SK-N-SH (cell line): ENCODE measurements at regions of chr14 and their contacts with region 1.

Region 1: DNA sequence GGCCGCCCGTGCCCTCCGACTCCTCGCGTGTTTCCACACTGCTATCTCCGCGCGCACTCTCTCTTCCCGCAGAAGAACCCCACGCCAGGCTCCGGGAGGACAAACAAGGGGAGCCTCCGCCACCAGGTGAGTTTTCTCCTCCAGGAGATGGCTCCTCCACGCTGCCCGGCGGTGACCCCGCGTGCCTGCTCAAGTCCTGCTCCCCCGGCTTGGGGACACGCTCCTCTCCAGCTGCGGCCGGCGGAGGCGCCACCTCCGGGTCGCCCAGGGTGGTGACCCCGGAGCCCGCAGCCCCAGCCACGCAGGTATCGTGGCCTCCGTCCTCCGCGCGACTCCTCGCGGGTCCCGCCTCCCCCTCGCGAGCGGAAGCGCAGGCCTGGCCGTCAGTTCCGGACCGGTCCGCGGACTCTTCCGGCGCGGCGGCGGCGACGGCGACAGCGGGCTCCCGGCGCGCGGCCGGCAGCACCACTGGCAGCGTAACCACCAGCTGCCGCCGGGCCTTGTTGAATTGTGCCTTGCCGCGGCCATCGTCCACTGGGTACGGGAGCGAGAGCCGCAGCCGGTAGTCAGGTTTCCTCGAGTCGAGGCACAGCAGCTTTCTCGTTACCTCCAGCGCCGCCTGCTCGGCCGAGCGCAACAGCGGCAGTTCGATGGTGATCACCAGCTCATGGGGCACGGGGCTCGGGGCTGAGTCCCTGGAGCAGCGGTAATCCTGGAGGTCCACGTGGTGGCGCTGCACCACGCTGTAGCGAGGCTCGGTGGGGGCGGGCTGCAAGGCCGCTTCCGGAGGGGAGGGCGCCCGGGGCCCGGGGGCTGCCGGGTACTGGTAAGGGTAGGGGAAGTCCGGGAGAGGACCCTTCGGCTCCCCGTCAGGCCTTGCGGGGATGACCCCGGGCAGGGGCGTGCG is 1.2 kb downstream of the DNAAF2 start:
- DNase-seq: peak; percentile 97
- H3K4me3 ChIP-seq: peak overlapping the region; percentile 72 to 86
- H3K27ac ChIP-seq: peak overlapping the region; percentile 94 to 95
- H3K4me1 ChIP-seq: peaks cover 4 to 7% of the 10 kb centered on the region in 2 experiments; a peak in 3 of 4 replicates
- H3K27me3 ChIP-seq: no peaks in the 10 kb centered on the region
- CTCF ChIP-seq: peak; percentile 90
- EP300 ChIP-seq: no peak
- RAD21 ChIP-seq: peak; percentile 77

Region 2: DNA sequence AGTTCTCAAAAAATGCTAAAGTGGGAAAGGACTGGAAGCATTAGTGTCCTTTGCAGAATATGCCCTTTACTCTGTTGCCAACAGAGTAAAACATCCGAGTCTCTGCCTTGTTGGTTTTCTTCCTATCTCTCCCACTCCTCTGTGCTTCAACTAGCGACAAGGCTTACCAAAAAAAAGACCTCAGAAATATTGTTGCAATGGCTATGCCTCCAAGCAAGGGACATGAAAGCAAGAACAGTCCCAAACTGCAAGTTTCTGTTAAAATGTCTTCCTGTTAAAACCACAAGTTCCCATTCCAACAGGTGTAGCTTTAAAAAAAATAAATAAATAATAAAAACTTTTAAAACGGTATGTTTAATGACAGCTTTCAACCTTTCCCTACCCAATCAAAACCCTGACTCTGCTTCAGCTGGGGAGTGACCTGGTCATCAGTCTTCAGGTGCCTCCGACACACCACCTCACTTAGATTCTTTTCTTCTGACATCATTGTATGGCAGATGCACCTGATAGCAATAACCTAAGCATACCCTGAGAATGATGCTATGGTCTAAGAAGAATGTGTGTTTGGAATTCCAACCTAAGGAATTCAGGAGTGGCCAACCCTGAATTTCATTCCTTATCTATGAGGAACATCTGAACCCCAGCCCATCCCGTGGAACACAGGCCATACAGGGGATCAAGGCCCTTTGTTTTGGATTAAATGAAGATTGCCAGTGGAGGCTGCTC is 128.7 kb before region 1 on chr14:
- CTCF ChIA-PET with region 1: no interaction called
- POLR2A ChIA-PET with region 1: no interaction called
- DNase-seq: no peak
- H3K4me3 ChIP-seq: no peak overlapping the region
- H3K27ac ChIP-seq: no peak overlapping the region
- H3K4me1 ChIP-seq: no peaks in the 10 kb centered on the region
- H3K27me3 ChIP-seq: peaks cover 7% of the 10 kb centered on the region; the same call in 1 of the 2 replicates
- CTCF ChIP-seq: no peak
- EP300 ChIP-seq: no peak
- RAD21 ChIP-seq: no peak

Region 3: GRCh38 chr14:49620182-49621113 is 13.4 kb before region 1 on chr14 and contains the starts of genes MGAT2 and RPL36AL:
- CTCF ChIA-PET with region 1: interaction called, 39 read pairs
- POLR2A ChIA-PET with region 1: interaction called, 17 read pairs
- DNase-seq: peak; percentile 99
- H3K4me3 ChIP-seq: peak within 1 kb of the TSS; percentile 92 to 96
- H3K27ac ChIP-seq: peak within 1 kb of the TSS; percentile 97 to 98
- H3K4me1 ChIP-seq: peaks cover 22 to 29% of the 10 kb centered on the region in 2 experiments
- H3K27me3 ChIP-seq: no peaks in the 10 kb centered on the region
- CTCF ChIP-seq: peak; percentile 45
- EP300 ChIP-seq: no peak
- RAD21 ChIP-seq: no peak
- polyA plus RNA-seq, gene MGAT2: 20.6 and 22.0 TPM in 2 replicates
- polyA plus RNA-seq, gene RPL36AL: 260 and 337 TPM in 2 replicates

Region 4: GRCh38 chr14:49816844-49817243 is 183.0 kb after region 1 on chr14:
- CTCF ChIA-PET with region 1: interaction called, 13 read pairs
- POLR2A ChIA-PET with region 1: no interaction called
- DNase-seq: no peak
- H3K4me3 ChIP-seq: no peak overlapping the region
- H3K27ac ChIP-seq: no peak overlapping the region
- H3K4me1 ChIP-seq: no peaks in the 10 kb centered on the region
- H3K27me3 ChIP-seq: no peaks in the 10 kb centered on the region
- CTCF ChIP-seq: no peak
- EP300 ChIP-seq: no peak
- RAD21 ChIP-seq: no peak

Region 5: GRCh38 chr14:49852301-49853157 is 218.6 kb after region 1 on chr14 and contains the start of gene NEMF:
- CTCF ChIA-PET with region 1: interaction called, 24 read pairs
- POLR2A ChIA-PET with region 1: interaction called, 4 read pairs
- DNase-seq: peak; percentile 84
- H3K4me3 ChIP-seq: peak within 1 kb of the TSS; percentile 85 to 87
- H3K27ac ChIP-seq: peak within 1 kb of the TSS; percentile 80 to 87
- H3K4me1 ChIP-seq: peaks cover 0 to 3% of the 10 kb centered on the region in 2 experiments; a peak in 3 of 4 replicates
- H3K27me3 ChIP-seq: no peaks in the 10 kb centered on the region
- CTCF ChIP-seq: peak; percentile 96
- EP300 ChIP-seq: no peak
- RAD21 ChIP-seq: no peak
- polyA plus RNA-seq, gene NEMF: 14.0 and 15.4 TPM in 2 replicates